Prostate gland (tissue), 2 donors: ENCODE measurements at regions of chr19 and their contacts with region 1.

Region 1: DNA sequence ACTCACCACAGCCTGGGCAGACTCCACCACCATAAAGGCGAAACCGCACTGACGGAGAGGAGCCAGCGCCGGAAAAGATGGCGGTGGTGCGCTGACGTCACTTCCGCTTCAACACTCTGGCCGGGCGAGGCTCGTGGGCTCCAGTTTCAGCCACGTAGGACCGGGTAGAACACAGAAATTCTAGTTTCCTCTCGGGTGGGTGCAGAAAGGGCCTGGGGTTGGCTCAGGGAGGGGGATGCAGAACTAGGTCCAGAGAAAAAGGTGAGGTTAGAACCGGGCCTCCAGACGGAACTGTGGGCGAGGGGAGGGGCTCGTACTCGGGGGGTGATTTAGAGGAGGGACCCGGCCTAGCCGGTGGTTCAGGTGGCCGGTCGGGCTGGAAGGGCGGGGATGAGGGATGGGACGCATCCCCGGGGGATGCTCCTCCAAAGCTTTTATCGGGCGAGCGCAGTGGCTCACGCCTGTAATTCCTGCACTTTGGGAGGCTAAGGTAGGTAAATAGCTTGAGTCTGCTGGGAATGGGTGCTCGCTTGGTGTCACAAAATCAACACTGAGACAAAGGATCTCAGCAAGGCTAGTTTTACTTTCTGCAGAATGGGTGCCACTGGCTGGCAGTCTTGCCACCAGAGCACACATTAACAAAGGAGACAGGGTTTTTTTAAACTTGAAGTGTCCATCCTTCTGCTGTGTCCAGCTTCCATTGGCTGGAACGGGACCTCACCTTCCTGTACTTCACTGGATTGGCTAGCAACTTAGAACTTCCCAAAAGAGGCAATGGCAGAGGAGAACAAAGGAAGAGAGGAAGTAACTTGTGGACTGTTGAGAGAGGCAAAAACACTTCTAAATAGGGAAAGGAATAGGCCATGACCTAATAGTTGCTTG is at the start of gene ZNF561:
- DNase-seq: peak; percentile 76
- H3K4me3 ChIP-seq: peak within 1 kb of the TSS; percentile 61 to 71
- H3K27ac ChIP-seq: peak within 1 kb of the TSS; percentile 90 to 95
- H3K4me1 ChIP-seq: no peaks in the 10 kb centered on the region
- H3K27me3 ChIP-seq: no peaks in the 10 kb centered on the region
- CTCF ChIP-seq: no peak
- POLR2A ChIP-seq: peak; percentile 34
- total RNA-seq, gene ZNF561: 27.8 to 32.3 TPM

Region 2: GRCh38 chr19:9354651-9355050 is 266.7 kb before region 1 on chr19:
- intact Hi-C with region 1: no loop called
- DNase-seq: no peak
- H3K4me3 ChIP-seq: no peak overlapping the region
- H3K27ac ChIP-seq: no peak overlapping the region
- H3K4me1 ChIP-seq: no peaks in the 10 kb centered on the region
- H3K27me3 ChIP-seq: no peaks in the 10 kb centered on the region
- CTCF ChIP-seq: no peak
- POLR2A ChIP-seq: no peak

Region 3: DNA sequence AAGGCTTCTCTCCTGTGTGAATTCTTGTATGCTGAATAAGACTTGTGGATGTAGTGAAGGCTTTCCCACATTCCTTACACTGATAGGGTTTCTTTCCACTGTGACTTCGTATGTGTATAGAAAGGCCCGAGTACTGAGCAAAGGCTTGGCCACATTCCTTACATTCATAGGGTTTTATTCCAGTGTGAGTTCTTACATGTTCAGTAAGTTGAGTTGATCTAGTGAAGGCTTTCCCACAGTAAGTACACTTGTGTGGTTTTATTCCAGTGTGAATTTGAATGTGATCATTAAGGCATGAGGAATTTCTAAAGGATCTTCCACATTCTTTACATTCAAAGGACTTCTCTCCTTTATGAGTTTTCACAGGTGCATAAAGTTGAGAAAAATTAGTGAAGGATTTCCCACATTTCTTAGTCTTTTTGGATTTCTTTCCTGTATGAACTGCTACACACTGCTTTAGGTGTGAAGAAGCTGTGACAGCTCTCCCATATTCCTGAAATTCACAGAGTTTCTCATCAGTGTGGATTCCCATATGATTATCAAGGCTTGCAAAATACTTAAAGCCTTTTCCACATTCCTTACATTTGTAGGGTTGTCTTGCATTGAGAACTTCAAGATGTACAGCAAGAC is 10.8 kb before region 1 on chr19:
- intact Hi-C with region 1: no loop called
- DNase-seq: no peak
- H3K4me3 ChIP-seq: no peak overlapping the region
- H3K27ac ChIP-seq: no peak overlapping the region
- H3K4me1 ChIP-seq: no peaks in the 10 kb centered on the region
- H3K27me3 ChIP-seq: no peaks in the 10 kb centered on the region
- CTCF ChIP-seq: no peak
- POLR2A ChIP-seq: no peak

Region 4: GRCh38 chr19:9674663-9675357 is 53.4 kb after region 1 on chr19 and contains the start of gene ZNF562:
- intact Hi-C with region 1: loop called (anchors 2 kb)
- DNase-seq: peak; percentile 82
- H3K4me3 ChIP-seq: peak within 1 kb of the TSS; percentile 66 to 78
- H3K27ac ChIP-seq: peak within 1 kb of the TSS; percentile 96 to 97
- H3K4me1 ChIP-seq: no peaks in the 10 kb centered on the region
- H3K27me3 ChIP-seq: no peaks in the 10 kb centered on the region
- CTCF ChIP-seq: no peak
- POLR2A ChIP-seq: peak; percentile 33
- total RNA-seq, gene ZNF562: 30.0 to 34.9 TPM